ENCODE measurements at regions of chr11 and their contacts with region 1.

Region 1: DNA sequence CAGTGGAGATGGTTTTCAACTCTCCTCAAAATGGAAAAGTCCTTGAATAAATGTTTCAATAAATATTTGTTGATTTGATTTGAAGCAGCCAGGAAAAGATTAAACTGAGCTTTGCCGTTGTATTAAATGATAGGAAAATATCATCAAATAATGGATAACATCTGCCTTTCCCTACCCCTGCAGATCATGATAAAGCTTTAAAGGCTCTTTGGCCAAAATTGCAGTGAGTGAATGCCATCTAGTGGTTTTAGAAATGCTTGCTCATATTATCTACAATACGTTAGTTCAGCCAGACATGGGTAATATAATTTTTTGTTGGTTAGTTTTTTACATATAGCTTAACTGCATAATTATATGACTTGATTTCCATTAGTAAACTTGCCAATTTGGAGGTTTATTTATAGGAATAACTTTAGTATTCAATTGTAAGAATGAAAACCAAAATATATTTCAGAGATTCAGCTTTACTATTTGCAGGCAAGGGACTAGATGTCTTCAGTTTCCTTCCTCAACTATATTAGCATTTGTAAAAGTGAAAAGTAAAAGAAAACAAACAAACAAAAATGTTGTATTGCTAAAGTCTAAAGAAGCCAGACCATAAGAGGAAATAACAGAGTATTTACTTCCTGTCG is 159.2 kb downstream of the MSANTD4 start:
- DNase-seq: peak; percentile 68
- ATAC-seq: peak; percentile 90
- H3K4me3 ChIP-seq: no peak overlapping the region
- H3K27ac ChIP-seq: no peak overlapping the region
- H3K4me1 ChIP-seq: no peaks in the 10 kb centered on the region
- H3K27me3 ChIP-seq: no peaks in the 10 kb centered on the region
- CTCF ChIP-seq: peak; percentile 81
- POLR2A ChIP-seq: no peak
- RAD21 ChIP-seq: peak; percentile 91

Region 2: GRCh38 chr11:103927535-103927934 is 1935.3 kb before region 1 on chr11:
- CTCF ChIA-PET with region 1: no interaction called
- POLR2A ChIA-PET with region 1: no interaction called
- dilution Hi-C with region 1: no loop called
- in situ Hi-C with region 1: no loop called
- intact Hi-C with region 1: loop called (anchors 2 kb)
- DNase-seq: peak; percentile 58
- ATAC-seq: peak; percentile 64
- H3K4me3 ChIP-seq: no peak overlapping the region
- H3K27ac ChIP-seq: no peak overlapping the region
- H3K4me1 ChIP-seq: peaks cover 7% of the 10 kb centered on the region
- H3K27me3 ChIP-seq: no peaks in the 10 kb centered on the region
- CTCF ChIP-seq: peak; percentile 62
- POLR2A ChIP-seq: no peak
- RAD21 ChIP-seq: peak; percentile 73

Region 3: GRCh38 chr11:104260456-104260855 is 1602.4 kb before region 1 on chr11:
- CTCF ChIA-PET with region 1: no interaction called
- POLR2A ChIA-PET with region 1: no interaction called
- dilution Hi-C with region 1: no loop called
- in situ Hi-C with region 1: no loop called
- intact Hi-C with region 1: loop called (anchors 5 kb)
- DNase-seq: no peak
- ATAC-seq: no peak
- H3K4me3 ChIP-seq: no peak overlapping the region
- H3K27ac ChIP-seq: no peak overlapping the region
- H3K4me1 ChIP-seq: no peaks in the 10 kb centered on the region
- H3K27me3 ChIP-seq: no peaks in the 10 kb centered on the region
- CTCF ChIP-seq: no peak
- POLR2A ChIP-seq: no peak
- RAD21 ChIP-seq: no peak

Region 4: GRCh38 chr11:104946907-104947306 is 915.9 kb before region 1 on chr11:
- CTCF ChIA-PET with region 1: interaction called, 3 read pairs
- POLR2A ChIA-PET with region 1: no interaction called
- dilution Hi-C with region 1: no loop called
- in situ Hi-C with region 1: loop called (anchors 25 kb)
- intact Hi-C with region 1: loop called (anchors 5 kb)
- DNase-seq: peak; percentile 59
- ATAC-seq: no peak
- H3K4me3 ChIP-seq: no peak overlapping the region
- H3K27ac ChIP-seq: no peak overlapping the region
- H3K4me1 ChIP-seq: no peaks in the 10 kb centered on the region
- H3K27me3 ChIP-seq: no peaks in the 10 kb centered on the region
- CTCF ChIP-seq: peak; percentile 46
- POLR2A ChIP-seq: no peak
- RAD21 ChIP-seq: peak; percentile 59

Region 5: DNA sequence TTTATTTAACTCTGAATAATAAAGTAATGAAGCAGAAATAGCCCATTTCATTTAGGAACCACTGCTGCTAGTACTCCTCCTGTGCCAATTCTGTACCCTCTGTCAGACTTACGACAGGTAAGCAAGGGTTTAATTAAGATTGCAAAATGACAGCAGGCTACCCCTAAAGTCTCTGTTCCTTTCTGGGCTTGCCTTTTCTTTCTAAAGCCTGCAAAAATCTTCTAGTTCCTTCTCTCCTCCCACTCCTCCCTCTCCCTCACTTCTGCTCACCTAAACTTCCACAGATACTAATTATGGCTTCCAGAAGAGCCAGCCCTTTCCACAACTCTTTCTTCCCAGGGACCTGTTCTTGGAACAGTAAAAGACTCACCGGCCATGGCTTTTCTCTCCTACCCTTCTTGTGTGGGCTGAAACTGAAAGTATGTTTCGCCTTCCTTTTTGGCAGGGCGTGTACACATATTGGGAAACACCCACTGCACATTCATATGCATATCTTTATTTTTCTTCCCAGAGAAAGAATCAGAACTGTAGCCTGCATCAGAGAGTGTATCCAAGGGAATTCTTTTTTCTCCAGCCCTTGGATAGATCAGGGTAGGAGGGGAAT is 817.8 kb before region 1 on chr11 and contains the start of gene CARD16:
- CTCF ChIA-PET with region 1: no interaction called
- POLR2A ChIA-PET with region 1: no interaction called
- dilution Hi-C with region 1: no loop called
- in situ Hi-C with region 1: no loop called
- intact Hi-C with region 1: loop called (anchors 5 kb)
- DNase-seq: peak; percentile 81
- ATAC-seq: peak; percentile 37
- H3K4me3 ChIP-seq: peak within 1 kb of the TSS; percentile 82
- H3K27ac ChIP-seq: peak within 1 kb of the TSS; percentile 96
- H3K4me1 ChIP-seq: peaks cover 9% of the 10 kb centered on the region
- H3K27me3 ChIP-seq: no peaks in the 10 kb centered on the region
- CTCF ChIP-seq: no peak
- POLR2A ChIP-seq: no peak
- RAD21 ChIP-seq: no peak
- total RNA-seq, gene CARD16: 7.9 and 23.3 TPM in 2 replicates

Measured in IMR-90 (cell line).